Activated CD4-positive, alpha-beta memory T cell treated with anti-CD3 and anti-CD28 coated beads, Interleukin-2, amount 10 ng/mL, durations not matched to agents 7 days and 5 days (primary cell): ENCODE measurements at regions of chr17 and their contacts with region 1.

Region 1: DNA sequence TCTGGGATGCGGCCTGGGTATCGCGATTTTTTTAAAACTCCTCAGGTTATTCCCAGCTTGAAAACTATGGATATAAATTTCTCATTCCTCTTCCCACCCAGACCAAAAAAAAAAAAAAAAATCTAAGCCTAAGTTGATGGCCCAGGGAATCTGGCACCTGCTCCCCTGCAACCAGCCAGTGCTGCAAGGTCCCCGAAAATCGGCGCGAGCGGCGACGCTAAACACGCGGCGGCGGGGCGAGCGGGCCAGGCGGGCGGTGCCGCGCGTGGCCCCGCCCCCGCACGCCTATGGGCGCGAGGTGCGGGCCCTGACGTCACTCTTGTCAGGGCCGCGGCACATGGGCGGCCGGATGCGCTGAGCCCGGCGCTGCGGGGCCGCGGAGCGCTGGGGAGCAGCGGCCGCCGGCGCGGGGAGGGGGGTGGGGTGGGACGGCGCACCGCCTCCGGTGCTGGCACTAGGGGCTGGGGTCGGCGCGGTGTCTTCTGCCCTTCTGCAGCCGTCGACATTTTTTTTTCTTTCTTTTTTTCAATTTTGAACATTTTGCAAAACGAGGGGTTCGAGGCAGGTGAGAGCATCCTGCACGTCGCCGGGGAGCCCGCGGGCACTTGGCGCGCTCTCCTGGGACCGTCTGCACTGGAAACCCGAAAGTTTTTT is at the start of gene HLF:
- DNase-seq: peak; percentile 80
- H3K4me3 Mint-ChIP-seq: peak within 1 kb of the TSS; percentile 62
- H3K27ac Mint-ChIP-seq: no peak within 1 kb of the TSS
- H3K4me1 Mint-ChIP-seq: peaks cover 20% of the 10 kb centered on the region
- H3K27me3 Mint-ChIP-seq: peaks cover 76% of the 10 kb centered on the region
- total RNA-seq, gene HLF: 2.8 to 3.3 TPM

Region 2: GRCh38 chr17:55238179-55238930 is 26.4 kb before region 1 on chr17:
- CTCF ChIA-PET with region 1: interaction called, 6 read pairs
- POLR2A ChIA-PET with region 1: interaction called, 25 read pairs
- DNase-seq: peak; percentile 87
- H3K4me3 Mint-ChIP-seq: peak overlapping the region; percentile 77
- H3K27ac Mint-ChIP-seq: peak overlapping the region; percentile 26
- H3K4me1 Mint-ChIP-seq: peaks cover 19% of the 10 kb centered on the region
- H3K27me3 Mint-ChIP-seq: peaks cover 23% of the 10 kb centered on the region

Region 3: GRCh38 chr17:55308613-55309391 is 44.0 kb after region 1 on chr17:
- CTCF ChIA-PET with region 1: no interaction called
- POLR2A ChIA-PET with region 1: no interaction called
- DNase-seq: no peak
- H3K4me3 Mint-ChIP-seq: no peak overlapping the region
- H3K27ac Mint-ChIP-seq: no peak overlapping the region
- H3K4me1 Mint-ChIP-seq: peaks cover 16% of the 10 kb centered on the region
- H3K27me3 Mint-ChIP-seq: no peaks in the 10 kb centered on the region